ENCODE measurements at regions of chr1 and their contacts with region 1.

Region 1: DNA sequence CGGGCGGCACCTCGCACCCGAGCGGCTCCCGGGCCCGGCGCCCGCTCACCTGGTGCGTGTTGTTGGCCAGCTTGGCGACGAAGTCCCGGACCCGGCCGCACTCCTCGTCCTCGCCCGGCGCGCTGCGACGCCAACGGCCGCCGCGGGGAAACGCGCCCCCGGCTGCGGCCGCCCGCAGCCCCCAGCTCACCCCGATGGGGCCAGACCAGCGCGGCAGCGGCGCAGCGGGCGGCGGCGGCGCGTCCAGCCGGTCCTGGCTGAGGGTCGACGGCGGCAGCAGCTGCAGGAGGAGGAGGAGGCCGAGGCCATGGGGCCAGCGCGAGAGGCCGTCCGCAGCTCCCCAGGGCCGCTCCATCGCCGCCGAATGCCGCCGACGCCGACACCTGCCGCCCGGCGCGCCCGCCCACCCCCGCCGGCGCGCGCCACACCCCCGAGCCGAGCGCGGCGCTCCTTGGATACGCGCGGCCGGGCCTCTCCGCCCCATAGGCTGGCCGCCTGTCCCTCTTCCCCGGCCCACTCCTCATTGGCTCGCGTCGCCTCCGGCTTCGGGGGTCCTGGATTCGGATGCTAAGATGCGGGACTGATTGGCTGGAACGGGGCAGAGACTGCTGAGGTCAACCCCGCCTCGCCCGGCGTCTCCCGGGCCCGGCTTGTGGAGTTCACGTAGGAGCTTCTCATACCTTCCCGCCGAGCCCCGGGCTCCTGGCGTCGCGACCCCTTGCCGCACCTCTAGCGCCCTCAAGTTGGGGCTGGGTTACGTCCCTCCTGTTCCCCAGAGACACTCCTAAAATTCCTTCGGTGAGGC is at the start of gene SORT1:
- DNase-seq: peak; percentile 75 to 83
- H3K4me3 ChIP-seq: peak within 1 kb of the TSS; percentile 69
- H3K27ac ChIP-seq: no peak within 1 kb of the TSS
- H3K4me1 ChIP-seq: peaks cover 38% of the 10 kb centered on the region
- H3K27me3 ChIP-seq: no peaks in the 10 kb centered on the region
- CTCF ChIP-seq: peak; percentile 27; the same call in 1 of the 2 replicates
- total RNA-seq, gene SORT1: 25.7 and 27.9 TPM in 2 replicates

Region 2: GRCh38 chr1:109084563-109085517 is 312.9 kb before region 1 on chr1:
- CTCF ChIA-PET with region 1: no interaction called
- POLR2A ChIA-PET with region 1: interaction called, 10 read pairs
- intact Hi-C with region 1: loop called (anchors 1 kb)
- DNase-seq: peak in 1 of 2 experiments; percentile 30
- H3K4me3 ChIP-seq: no peak overlapping the region
- H3K27ac ChIP-seq: no peak overlapping the region
- H3K4me1 ChIP-seq: peaks cover 6% of the 10 kb centered on the region
- H3K27me3 ChIP-seq: no peaks in the 10 kb centered on the region
- CTCF ChIP-seq: no peak

Region 3: DNA sequence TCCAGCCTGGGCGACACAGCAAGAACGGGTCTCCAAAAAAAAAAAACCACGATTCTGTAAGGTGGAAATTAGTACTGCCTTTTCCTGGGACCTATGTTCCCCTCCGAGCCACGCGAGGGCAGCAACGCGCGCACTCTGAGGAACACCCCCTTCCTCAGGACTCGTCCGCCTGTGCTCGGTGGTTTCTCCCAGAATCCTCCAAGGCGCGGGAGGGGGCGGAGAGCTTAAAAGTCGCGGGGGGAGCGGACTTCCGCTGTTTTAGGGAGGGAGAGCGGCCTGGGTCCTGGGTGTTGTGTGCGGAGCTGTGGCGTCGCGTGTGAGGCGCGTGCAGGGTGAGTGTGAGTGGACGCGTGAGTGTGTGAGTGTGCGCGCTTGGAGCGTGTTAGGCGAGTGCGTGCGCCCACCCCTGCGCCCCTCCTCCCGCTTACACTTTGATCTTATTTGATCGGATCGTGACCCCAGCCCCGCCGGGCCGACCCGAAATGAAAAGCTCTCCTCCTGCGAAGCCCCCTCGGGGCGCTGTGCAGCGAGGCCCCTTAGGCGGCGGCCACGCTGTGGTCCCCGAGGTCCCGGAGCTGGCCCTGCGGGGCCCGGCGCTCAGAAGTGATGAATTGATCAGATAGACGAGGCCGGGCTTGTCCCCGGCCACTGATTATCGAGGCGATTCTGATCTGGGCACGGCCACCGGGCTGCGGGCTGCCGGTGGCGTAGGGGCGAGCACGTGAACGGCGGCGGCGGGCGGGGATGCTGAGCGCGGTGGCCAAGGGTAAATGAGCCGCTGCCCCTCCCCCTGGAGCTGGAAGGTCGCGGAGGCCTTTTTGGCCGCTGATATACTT is 297.6 kb before region 1 on chr1:
- CTCF ChIA-PET with region 1: no interaction called
- POLR2A ChIA-PET with region 1: no interaction called
- intact Hi-C with region 1: loop called (anchors 1 kb)
- DNase-seq: peak; percentile 95 to 97
- H3K4me3 ChIP-seq: peak overlapping the region; percentile 99
- H3K27ac ChIP-seq: peak overlapping the region; percentile 84
- H3K4me1 ChIP-seq: peaks cover 35% of the 10 kb centered on the region
- H3K27me3 ChIP-seq: no peaks in the 10 kb centered on the region
- CTCF ChIP-seq: peak; percentile 93

Region 4: DNA sequence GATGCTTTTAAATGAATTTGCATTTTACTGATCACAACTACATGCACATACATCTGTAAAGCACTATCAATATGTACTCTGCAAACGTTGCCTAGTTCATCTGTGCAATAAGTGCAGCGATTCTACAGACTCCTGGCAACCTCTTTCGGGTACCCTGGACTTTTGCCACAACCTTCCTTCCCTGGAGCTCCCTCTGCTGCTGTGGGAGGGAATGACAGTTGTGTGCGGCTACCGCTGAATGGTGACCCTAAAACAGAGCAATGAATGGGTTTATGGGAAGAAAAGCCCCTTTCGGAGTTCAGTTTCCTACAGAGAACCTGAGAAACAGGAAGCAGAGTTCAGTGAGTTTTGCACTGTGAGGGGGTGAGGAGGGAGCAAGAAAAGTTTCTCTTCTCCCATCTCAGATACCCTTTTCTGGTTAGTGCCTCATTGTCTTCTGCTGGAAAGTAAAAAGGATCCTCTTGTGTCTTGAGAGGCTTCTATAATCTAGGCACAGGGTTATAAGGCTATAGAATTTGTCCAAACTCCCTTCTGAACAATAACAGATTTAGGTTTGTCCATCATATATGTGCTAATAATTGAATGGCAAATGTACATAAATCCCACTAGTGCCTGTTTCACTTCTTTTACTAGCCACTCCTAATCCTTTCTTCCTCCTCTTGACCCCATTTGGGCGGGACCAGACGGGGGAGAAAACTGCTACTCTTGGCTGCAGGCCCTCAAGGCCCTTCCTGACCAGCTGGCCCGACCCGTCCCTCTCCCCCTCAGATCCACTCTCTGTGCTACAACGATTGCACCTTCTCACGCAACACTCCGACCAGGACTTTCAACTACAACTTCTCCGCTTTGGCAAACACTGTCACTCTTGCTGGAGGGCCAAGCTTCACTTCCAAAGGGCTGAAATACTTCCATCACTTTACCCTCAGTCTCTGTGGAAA is 203.8 kb before region 1 on chr1:
- CTCF ChIA-PET with region 1: no interaction called
- POLR2A ChIA-PET with region 1: interaction called, 16 read pairs
- intact Hi-C with region 1: no loop called
- DNase-seq: peak in 1 of 2 experiments; percentile 61
- H3K4me3 ChIP-seq: no peak overlapping the region
- H3K27ac ChIP-seq: no peak overlapping the region
- H3K4me1 ChIP-seq: peaks cover 24% of the 10 kb centered on the region
- H3K27me3 ChIP-seq: no peaks in the 10 kb centered on the region
- CTCF ChIP-seq: peak; percentile 93

Region 5: DNA sequence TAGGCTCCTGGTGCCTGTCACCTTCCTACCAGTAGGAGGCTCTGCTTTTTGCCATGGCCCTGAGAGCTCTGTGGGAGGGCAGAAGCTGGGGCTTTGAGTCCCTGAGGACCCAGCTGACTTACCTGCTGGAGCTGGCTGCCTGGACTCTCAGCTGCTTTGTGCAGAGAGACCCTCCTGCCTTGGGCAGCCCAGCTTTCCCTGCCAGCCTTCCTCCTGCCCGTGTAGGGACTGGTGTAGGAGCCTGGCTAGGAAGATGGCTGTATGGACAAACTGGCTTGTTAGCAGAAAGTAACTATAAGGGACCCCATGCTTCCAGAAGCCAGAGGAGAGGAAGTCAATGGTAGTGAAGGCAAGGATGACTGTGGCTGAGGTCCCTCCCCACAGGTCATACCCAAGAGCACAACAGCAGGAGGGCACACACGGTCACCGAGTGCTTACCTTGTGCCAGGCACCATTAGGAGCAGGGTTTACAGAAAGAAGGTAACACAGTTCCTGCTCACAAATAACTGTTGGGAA is 158.1 kb before region 1 on chr1:
- CTCF ChIA-PET with region 1: interaction called, 3 read pairs
- POLR2A ChIA-PET with region 1: interaction called, 27 read pairs
- intact Hi-C with region 1: no loop called
- DNase-seq: peak; percentile 36 to 66
- H3K4me3 ChIP-seq: no peak overlapping the region
- H3K27ac ChIP-seq: peak overlapping the region; percentile 92
- H3K4me1 ChIP-seq: peaks cover 38% of the 10 kb centered on the region
- H3K27me3 ChIP-seq: no peaks in the 10 kb centered on the region
- CTCF ChIP-seq: peak; percentile 80

Region 6: GRCh38 chr1:109282952-109283747 is 114.6 kb before region 1 on chr1 and contains the start of gene PSRC1:
- CTCF ChIA-PET with region 1: interaction called, 4 read pairs
- POLR2A ChIA-PET with region 1: no interaction called
- intact Hi-C with region 1: loop called (anchors 1 kb)
- DNase-seq: peak; percentile 89 to 94
- H3K4me3 ChIP-seq: peak within 1 kb of the TSS; percentile 76
- H3K27ac ChIP-seq: peak within 1 kb of the TSS; percentile 70
- H3K4me1 ChIP-seq: peaks cover 25% of the 10 kb centered on the region
- H3K27me3 ChIP-seq: no peaks in the 10 kb centered on the region
- CTCF ChIP-seq: peak; percentile 57
- total RNA-seq, gene PSRC1: 26.4 and 28.6 TPM in 2 replicates

Region 7: DNA sequence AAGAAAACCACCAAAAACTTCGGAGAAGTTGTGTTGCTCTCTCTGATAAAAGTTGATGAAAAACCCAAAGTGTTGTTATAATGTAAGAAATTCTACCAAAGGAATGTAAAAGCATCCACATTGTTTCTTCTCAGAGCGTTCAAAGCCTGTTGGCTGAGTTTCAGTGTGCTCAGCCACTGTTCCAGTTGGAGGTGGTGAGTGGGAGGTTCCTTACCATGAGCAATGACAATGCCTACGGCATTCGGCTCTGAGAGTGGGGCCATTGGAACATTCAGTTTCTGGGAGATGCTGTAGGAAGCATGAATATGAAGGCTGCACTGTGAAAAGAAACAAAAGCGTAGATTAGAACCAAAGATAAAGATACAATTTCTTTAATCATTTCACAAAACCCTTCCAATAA is 70.5 kb before region 1 on chr1:
- CTCF ChIA-PET with region 1: no interaction called
- POLR2A ChIA-PET with region 1: no interaction called
- intact Hi-C with region 1: no loop called
- DNase-seq: no peak
- H3K4me3 ChIP-seq: no peak overlapping the region
- H3K27ac ChIP-seq: no peak overlapping the region
- H3K4me1 ChIP-seq: no peaks in the 10 kb centered on the region
- H3K27me3 ChIP-seq: no peaks in the 10 kb centered on the region
- CTCF ChIP-seq: no peak

Measured in PC-9 (cell line).